OCI-LY7 (cell line): ENCODE measurements at regions of chr6 and their contacts with region 1.

Region 1: DNA sequence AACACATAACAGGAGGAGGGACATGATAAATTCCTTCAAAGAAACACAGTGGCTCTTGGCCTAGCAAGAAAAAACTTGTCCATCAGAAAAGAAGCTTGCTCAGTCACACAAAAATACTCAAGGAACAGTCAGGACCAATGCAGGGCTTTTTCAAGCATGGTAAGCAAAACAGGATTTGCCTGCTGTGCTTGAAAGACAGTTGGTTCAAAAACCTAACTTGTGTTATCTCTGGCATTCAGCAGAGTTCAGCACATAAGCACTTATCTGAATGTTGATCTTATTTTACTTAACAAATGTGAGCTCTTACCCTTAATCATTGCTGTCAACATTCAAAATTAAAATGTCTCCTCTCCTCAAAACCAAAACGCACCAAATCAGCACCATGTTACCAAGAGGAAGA is 38.4 kb downstream of the ATG5 start:
- DNase-seq: no peak
- H3K4me3 ChIP-seq: no peak overlapping the region
- H3K27ac ChIP-seq: no peak overlapping the region
- H3K4me1 ChIP-seq: no peaks in the 10 kb centered on the region
- CTCF ChIP-seq: no peak

Region 2: GRCh38 chr6:105920071-105920470 is 367.1 kb before region 1 on chr6:
- CTCF ChIA-PET with region 1: no interaction called
- POLR2A ChIA-PET with region 1: no interaction called
- intact Hi-C with region 1: no loop called
- DNase-seq: no peak
- H3K4me3 ChIP-seq: no peak overlapping the region
- H3K27ac ChIP-seq: no peak overlapping the region
- H3K4me1 ChIP-seq: no peaks in the 10 kb centered on the region
- CTCF ChIP-seq: no peak

Region 3: DNA sequence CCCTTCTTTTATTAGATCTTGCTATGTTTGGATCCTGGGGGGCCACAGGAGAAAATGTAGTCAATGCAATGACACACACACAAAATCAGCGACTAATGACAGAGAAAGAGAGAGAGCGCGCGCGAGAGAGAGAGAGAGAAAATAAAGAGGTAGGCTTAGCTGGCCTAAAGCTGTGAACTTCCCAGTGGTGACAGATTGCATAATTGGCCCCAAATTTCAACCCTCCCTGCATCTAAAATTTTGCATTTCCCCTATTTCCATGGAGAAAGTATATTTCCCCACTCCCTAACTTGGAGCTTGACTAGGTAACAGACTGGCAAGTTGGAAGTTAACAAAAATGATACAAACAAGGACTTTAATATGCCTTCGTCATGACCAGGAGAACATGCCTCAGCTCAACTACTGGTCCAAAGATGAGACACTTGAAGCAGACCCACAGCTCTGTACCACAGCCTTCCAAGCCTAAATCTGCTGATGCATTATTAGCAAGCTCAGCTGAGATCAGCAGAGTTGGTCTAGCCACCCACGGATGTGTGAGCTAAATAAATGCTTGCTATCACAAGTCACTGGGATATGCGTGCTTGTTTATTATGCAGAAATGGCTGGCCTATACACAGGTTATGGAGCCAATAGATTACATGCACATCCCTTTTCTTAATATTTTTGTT is 319.2 kb before region 1 on chr6:
- CTCF ChIA-PET with region 1: no interaction called
- POLR2A ChIA-PET with region 1: no interaction called
- intact Hi-C with region 1: no loop called
- DNase-seq: no peak
- H3K4me3 ChIP-seq: no peak overlapping the region
- H3K27ac ChIP-seq: no peak overlapping the region
- H3K4me1 ChIP-seq: peaks cover 3% of the 10 kb centered on the region
- CTCF ChIP-seq: no peak

Region 4: DNA sequence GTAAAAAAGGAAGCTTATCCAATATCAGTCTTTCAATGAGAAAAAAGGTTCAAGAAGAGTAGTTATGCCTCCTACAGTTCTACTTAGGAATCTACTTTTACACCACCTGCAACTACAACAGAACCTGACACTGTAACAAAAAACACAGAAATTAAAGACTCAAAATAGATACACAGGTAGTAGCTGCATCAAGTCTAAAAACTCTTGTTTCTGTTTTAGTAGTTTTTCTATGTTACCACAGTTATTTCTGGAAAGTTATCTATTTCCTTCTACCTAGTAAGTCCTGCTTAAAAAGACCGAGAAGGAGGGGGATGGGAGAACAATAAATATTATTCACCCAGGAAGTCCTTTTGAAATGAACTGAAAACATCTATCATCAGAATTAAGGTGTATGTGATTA is 14.1 kb before region 1 on chr6:
- CTCF ChIA-PET with region 1: no interaction called
- POLR2A ChIA-PET with region 1: interaction called, 16 read pairs
- intact Hi-C with region 1: no loop called
- DNase-seq: peak; percentile 7
- H3K4me3 ChIP-seq: no peak overlapping the region
- H3K27ac ChIP-seq: no peak overlapping the region
- H3K4me1 ChIP-seq: peaks cover 13% of the 10 kb centered on the region
- CTCF ChIP-seq: peak; percentile 33; the same call in 1 of the 2 replicates